ENCODE measurements at regions of chr12 and their contacts with region 1.

Region 1: DNA sequence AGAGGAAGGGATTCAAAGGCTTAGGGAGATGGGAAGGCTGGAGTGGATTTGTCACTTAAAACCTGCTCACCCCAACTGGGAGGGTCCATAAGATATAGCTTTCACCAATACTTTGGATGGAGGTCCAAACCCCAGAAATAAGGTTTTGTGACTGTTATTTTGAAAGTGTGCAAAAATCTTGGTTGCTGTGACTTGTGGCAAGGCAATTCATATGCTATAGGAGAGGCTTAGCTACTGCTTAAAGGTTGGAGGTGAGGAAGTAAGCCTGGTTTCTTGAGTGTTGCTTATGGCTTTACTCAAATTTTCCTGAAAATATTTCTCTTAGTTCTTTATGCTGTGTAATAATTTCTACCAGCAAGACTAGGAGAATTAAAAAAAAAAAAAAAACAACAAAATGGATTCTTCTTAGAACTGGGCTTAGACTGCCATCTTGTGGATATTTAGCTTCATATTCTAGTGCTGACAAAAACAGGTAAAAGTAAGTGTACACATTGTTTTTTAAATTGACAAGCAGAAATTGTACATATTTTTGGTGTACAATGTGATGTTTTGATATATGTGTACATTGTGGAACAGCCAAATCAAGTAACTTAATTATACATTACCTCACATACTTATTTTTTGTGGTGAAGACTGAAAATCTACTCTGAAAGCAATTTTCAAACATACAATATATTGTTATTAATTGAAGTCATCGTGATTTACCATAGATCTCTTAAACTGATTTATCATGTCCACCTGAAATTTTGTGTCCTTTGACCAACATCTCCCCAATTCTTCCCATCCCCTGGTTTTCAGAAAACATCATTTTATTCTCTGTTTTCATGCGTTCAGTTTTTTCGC is 23.0 kb downstream of the PDE6H start:
- DNase-seq: no peak
- H3K4me3 Mint-ChIP-seq: no peak overlapping the region
- H3K27ac Mint-ChIP-seq: no peak overlapping the region
- H3K4me1 Mint-ChIP-seq: peaks cover 28% of the 10 kb centered on the region
- H3K27me3 Mint-ChIP-seq: no peaks in the 10 kb centered on the region
- CTCF ChIP-seq: peak; percentile 50

Region 2: DNA sequence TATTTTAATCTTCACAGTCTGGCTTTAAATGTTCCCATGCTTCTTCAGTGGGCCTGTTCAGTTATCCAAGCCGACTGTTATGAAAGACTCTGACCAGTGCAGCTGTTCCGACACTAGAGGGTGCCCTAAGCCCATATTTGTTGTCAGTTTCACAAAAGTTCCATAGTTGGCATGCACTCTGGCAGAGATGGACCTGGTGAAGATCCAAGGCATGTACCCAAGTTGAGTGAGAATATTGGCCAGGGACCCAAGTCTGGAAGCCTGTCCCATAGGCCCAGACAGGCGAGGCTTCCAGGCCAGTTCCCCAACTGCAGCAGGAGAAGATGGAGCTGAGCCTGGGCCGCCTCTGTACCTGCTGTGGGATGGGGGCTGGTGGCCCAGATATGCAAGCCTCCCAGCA is 272.0 kb before region 1 on chr12:
- CTCF ChIA-PET with region 1: no interaction called
- intact Hi-C with region 1: loop called (anchors 1 kb)
- DNase-seq: peak; percentile 56
- H3K4me3 Mint-ChIP-seq: no peak overlapping the region
- H3K27ac Mint-ChIP-seq: no peak overlapping the region
- H3K4me1 Mint-ChIP-seq: no peaks in the 10 kb centered on the region
- H3K27me3 Mint-ChIP-seq: no peaks in the 10 kb centered on the region
- CTCF ChIP-seq: peak; percentile 47

Region 3: DNA sequence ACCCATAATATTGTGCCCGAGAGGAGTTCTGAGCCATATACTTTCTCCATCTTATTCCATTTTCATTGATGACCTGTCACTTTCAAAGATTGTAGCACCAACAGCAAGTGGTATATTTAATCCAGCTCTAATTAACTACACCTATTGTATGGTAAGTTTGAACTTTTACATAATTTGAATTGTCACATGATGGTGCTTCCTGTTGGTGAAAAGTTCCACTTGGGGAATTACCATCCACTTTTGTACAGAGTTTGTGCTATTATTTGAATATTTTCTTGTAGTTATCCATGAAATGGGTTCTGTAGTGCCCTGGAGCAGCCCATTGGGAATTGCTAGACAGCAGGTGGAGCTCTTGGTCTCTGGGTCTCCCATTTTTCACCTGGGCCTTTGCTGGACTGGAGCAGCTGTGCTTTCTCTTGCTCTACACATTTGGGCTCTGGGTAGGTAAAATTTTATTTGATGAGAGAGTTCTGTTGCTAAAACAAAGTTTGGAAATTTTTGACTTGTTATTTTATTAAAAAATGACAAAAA is 184.8 kb before region 1 on chr12:
- CTCF ChIA-PET with region 1: interaction called, 23 read pairs
- intact Hi-C with region 1: loop called (anchors 1 kb)
- DNase-seq: peak; percentile 57
- H3K4me3 Mint-ChIP-seq: no peak overlapping the region
- H3K27ac Mint-ChIP-seq: no peak overlapping the region
- H3K4me1 Mint-ChIP-seq: peaks cover 9% of the 10 kb centered on the region
- H3K27me3 Mint-ChIP-seq: no peaks in the 10 kb centered on the region
- CTCF ChIP-seq: peak; percentile 51

Region 4: GRCh38 chr12:14845350-14845750 is 150.5 kb before region 1 on chr12:
- CTCF ChIA-PET with region 1: interaction called, 5 read pairs
- intact Hi-C with region 1: loop called (anchors 1 kb)
- DNase-seq: peak; percentile 50
- H3K4me3 Mint-ChIP-seq: no peak overlapping the region
- H3K27ac Mint-ChIP-seq: peak overlapping the region; percentile 12
- H3K4me1 Mint-ChIP-seq: peaks cover 19% of the 10 kb centered on the region
- H3K27me3 Mint-ChIP-seq: no peaks in the 10 kb centered on the region
- CTCF ChIP-seq: peak; percentile 50

Region 5: DNA sequence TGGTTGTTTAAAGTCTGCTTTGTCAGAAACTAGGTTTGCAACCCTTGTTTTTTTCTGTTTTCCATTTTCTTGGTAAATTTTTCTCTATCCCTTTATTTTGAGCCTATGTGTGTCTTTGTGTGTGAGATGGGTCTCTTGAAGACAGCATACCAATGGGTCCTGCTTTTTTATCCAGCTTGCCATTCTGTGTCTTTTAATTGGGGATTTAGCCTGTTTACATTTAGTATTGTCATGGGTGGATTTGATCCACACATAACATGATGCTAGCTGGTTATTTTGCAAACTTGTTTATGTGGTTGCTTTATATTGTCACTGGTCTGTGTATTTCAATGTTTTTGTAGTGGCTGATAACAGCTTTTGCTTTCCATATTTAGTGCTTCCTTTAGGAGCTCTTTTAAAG is 135.3 kb before region 1 on chr12:
- CTCF ChIA-PET with region 1: no interaction called
- intact Hi-C with region 1: no loop called
- DNase-seq: no peak
- H3K4me3 Mint-ChIP-seq: no peak overlapping the region
- H3K27ac Mint-ChIP-seq: no peak overlapping the region
- H3K4me1 Mint-ChIP-seq: no peaks in the 10 kb centered on the region
- H3K27me3 Mint-ChIP-seq: peaks cover 8% of the 10 kb centered on the region
- CTCF ChIP-seq: no peak

Region 6: DNA sequence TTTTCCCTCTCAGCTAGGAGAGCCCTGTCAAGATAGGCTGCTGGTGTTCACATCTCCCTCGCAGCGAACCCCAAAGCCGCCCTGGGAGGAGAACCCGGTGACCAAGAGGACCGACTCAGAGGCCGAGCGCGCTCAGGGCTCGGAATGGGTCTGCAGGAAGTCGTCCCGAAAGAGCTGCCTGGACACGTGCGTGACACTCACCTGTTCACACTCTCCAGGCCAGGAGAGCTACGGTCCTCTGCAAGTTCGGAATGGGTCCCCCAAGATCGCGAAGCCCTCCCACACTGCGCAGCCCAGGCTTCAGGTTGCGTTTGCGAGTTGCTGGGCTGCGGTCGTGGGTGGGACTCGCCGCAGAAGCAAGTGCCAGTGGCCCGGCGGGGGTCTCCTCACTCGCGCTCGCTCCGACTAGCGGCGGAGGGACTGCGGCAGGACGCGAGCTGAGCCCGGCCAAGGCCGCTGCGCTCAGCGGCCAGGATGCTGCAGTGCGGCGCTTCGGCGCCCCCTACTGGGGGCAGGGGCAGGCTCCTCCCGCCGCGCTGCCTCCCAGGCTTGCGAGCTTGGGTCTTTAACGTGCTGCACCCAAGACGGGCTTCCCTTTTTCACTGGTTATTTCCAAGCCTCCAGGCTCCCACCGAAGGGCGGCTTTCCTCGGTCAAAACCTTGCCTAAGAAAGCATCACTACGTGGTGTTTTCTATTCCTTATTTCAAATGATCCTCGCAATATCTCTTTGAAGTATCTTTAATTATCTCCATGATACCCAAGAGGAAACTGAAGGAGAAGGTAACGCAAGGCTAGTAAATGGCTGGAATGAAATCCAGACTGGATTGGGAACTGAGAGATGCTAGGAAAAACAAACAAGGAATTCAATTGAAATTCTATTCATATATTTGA is 225.4 kb after region 1 on chr12 and contains the start of gene RERG:
- CTCF ChIA-PET with region 1: interaction called, 4 read pairs
- intact Hi-C with region 1: loop called (anchors 5 kb)
- DNase-seq: peak; percentile 92
- H3K4me3 Mint-ChIP-seq: peak within 1 kb of the TSS; percentile 79
- H3K27ac Mint-ChIP-seq: peak within 1 kb of the TSS; percentile 29
- H3K4me1 Mint-ChIP-seq: peaks cover 12% of the 10 kb centered on the region
- H3K27me3 Mint-ChIP-seq: no peaks in the 10 kb centered on the region
- CTCF ChIP-seq: peak; percentile 94
- total RNA-seq, gene RERG: 6.0 and 8.9 TPM in 2 replicates

Region 7: DNA sequence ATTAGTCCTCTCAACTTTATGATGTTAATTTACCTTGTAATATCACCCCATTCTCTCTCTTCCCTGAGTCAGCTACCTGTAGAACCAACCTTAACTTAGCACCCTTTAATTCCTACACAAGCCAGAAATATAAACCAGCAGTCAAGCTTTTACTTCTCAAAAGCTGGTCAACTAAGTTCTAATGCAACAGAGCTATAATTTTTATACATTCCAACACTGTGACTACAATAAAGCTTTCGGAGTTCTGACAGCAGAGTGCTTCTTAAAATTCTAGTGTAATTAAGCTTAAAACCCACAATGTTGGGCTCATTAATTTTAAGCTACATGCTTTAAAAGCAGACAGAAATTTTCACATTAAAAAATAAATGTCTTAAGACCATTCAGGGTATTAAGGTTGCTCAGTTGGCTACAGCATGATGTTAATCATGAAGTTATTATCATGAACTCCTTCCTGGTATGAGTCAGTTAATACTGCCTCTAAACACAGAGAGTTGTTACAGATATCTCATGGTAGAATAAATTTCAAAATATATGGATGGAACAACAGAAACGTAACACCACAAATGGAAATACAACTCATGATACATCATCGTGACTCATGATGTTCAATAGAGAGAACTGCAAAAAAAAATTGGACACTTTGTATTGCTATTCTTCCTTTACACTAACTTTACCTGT is 666.6 kb after region 1 on chr12:
- CTCF ChIA-PET with region 1: no interaction called
- intact Hi-C with region 1: no loop called
- DNase-seq: no peak
- H3K4me3 Mint-ChIP-seq: peak overlapping the region; percentile 47
- H3K27ac Mint-ChIP-seq: peak overlapping the region; percentile 99
- H3K4me1 Mint-ChIP-seq: peaks cover 17% of the 10 kb centered on the region
- H3K27me3 Mint-ChIP-seq: no peaks in the 10 kb centered on the region
- CTCF ChIP-seq: no peak